HCT116 (cell line): ENCODE measurements at regions of chr9 and their contacts with region 1.

Region 1: GRCh38 chr9:33024966-33025571 is at the start of gene DNAJA1:
- DNase-seq: peak; percentile 82
- ATAC-seq: peak; percentile 90
- H3K4me3 ChIP-seq: peak within 1 kb of the TSS; percentile 93 to 95
- H3K27ac ChIP-seq: peak within 1 kb of the TSS; percentile 94
- H3K4me1 ChIP-seq: peaks cover 9 to 24% of the 10 kb centered on the region in 2 experiments
- H3K27me3 ChIP-seq: no peaks in the 10 kb centered on the region
- CTCF ChIP-seq: no peak
- POLR2A ChIP-seq: peak; percentile 96
- RAD21 ChIP-seq: no peak
- total RNA-seq, gene DNAJA1: 117 TPM

Region 2: DNA sequence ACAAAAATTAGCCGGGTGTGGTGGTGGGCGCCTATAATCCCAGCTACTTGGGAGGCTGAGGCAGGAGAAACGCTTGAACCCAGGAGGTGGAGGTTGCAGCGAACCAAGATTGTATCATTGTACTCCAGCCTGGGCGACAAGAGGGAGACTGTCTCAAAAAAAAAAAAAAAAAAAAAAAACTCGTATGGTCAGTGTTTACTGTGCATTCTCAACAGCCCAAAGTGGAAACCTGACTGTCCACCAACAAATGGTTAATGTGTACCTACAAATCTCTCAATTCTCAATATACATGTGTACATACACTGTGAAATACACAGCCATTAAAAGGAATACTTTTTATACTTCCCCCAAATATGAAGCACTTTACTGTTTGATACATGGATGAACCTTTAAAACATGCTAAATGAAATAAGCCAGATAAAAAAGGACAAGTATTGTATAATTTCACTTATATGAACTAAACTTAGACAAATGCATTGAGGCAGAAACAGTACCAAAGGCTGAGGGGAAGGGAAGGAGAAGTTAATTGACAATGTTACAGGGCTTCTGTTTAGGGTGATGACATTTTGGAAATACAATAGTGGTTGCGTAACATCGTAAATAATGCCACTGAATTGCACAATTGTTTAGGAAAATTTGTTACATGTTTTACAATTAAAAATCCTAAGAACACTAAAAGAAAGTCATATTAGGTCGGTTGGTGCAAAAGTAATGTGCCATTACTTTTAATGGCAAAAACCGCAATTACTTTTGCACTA is 16.5 kb after region 1 on chr9:
- CTCF ChIA-PET with region 1: no interaction called
- POLR2A ChIA-PET with region 1: interaction called, 43 read pairs
- RAD21 ChIA-PET with region 1: no interaction called
- intact Hi-C with region 1: no loop called
- DNase-seq: no peak
- ATAC-seq: no peak
- H3K4me3 ChIP-seq: no peak overlapping the region
- H3K27ac ChIP-seq: no peak overlapping the region
- H3K4me1 ChIP-seq: no peaks in the 10 kb centered on the region
- H3K27me3 ChIP-seq: no peaks in the 10 kb centered on the region
- CTCF ChIP-seq: no peak
- POLR2A ChIP-seq: no peak
- RAD21 ChIP-seq: no peak

Region 3: GRCh38 chr9:33076358-33077004 is 51.4 kb after region 1 on chr9 and contains the start of gene SMU1:
- CTCF ChIA-PET with region 1: no interaction called
- POLR2A ChIA-PET with region 1: interaction called, 10 read pairs
- RAD21 ChIA-PET with region 1: no interaction called
- intact Hi-C with region 1: no loop called
- DNase-seq: peak; percentile 96
- ATAC-seq: peak; percentile 98
- H3K4me3 ChIP-seq: peak within 1 kb of the TSS; percentile 96 to 99
- H3K27ac ChIP-seq: peak within 1 kb of the TSS; percentile 46
- H3K4me1 ChIP-seq: peaks cover 5 to 14% of the 10 kb centered on the region in 2 experiments; a peak in 3 of 4 replicates
- H3K27me3 ChIP-seq: no peaks in the 10 kb centered on the region
- CTCF ChIP-seq: no peak
- POLR2A ChIP-seq: peak; percentile 61
- RAD21 ChIP-seq: no peak
- total RNA-seq, gene SMU1: 30.5 TPM

Region 4: GRCh38 chr9:33144551-33144950 is 119.5 kb after region 1 on chr9:
- CTCF ChIA-PET with region 1: no interaction called
- POLR2A ChIA-PET with region 1: no interaction called
- RAD21 ChIA-PET with region 1: no interaction called
- intact Hi-C with region 1: no loop called
- DNase-seq: no peak
- ATAC-seq: no peak
- H3K4me3 ChIP-seq: no peak overlapping the region
- H3K27ac ChIP-seq: no peak overlapping the region
- H3K4me1 ChIP-seq: peaks cover 0 to 15% of the 10 kb centered on the region in 2 experiments; a peak in 1 of 4 replicates
- H3K27me3 ChIP-seq: no peaks in the 10 kb centered on the region
- CTCF ChIP-seq: no peak
- POLR2A ChIP-seq: no peak
- RAD21 ChIP-seq: no peak

Region 5: GRCh38 chr9:33159760-33160127 is 134.7 kb after region 1 on chr9:
- CTCF ChIA-PET with region 1: no interaction called
- POLR2A ChIA-PET with region 1: interaction called, 11 read pairs
- RAD21 ChIA-PET with region 1: no interaction called
- intact Hi-C with region 1: no loop called
- DNase-seq: no peak
- ATAC-seq: no peak
- H3K4me3 ChIP-seq: peak overlapping the region in 1 of 2 experiments; percentile 4; a peak in 3 of 4 replicates
- H3K27ac ChIP-seq: no peak overlapping the region
- H3K4me1 ChIP-seq: peaks cover 64 to 86% of the 10 kb centered on the region in 2 experiments
- H3K27me3 ChIP-seq: no peaks in the 10 kb centered on the region
- CTCF ChIP-seq: no peak
- POLR2A ChIP-seq: no peak
- RAD21 ChIP-seq: no peak